ENCODE measurements at regions of chr12 and their contacts with region 1.

Region 1: DNA sequence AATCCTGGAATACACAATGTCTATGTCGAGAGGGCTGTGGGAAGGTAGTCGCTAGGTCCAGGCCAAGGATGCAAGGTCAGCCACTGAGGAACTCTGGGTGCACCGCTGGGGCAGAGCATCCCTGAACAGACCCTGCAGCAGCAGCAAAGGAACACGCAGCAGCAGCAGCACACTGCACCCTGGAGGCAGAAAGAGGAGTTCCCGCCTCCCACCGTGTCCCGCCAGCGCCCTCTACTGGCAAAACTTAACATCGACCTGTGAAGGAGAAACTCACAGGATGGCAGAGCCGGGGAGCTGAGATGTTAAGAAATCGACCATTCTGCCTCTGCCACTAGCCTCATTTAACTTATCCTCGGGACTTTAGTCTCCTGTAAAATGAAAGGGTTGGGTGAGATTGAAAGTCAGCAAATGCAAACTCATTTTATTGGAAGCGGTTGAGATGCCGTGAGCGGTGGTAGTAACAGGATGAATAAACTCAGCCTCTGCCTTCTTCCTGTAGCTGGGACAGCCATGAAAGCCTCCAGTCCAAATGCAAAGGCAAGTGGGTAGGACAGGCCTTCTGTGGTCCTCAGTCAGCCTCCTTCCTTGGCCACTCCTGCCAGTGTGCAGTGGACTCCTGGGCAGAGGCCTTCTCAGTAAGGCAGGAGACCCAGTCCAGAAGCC is 45.6 kb downstream of the STAB2 start:
- DNase-seq: peak in 2 of 5 donors; percentile 20 to 63
- ATAC-seq: peak in 1 of 4 donors; percentile 36
- H3K4me3 ChIP-seq: no peak overlapping the region
- H3K27ac ChIP-seq: no peak overlapping the region
- H3K4me1 ChIP-seq: peaks cover 0 to 7% (median 0%) of the 10 kb centered on the region in 12 donors
- H3K27me3 ChIP-seq: no peaks in the 10 kb centered on the region
- CTCF ChIP-seq: peak in 10 of 12 donors; percentile 29 to 56 (median 43)
- POLR2A ChIP-seq: no peak

Region 2: DNA sequence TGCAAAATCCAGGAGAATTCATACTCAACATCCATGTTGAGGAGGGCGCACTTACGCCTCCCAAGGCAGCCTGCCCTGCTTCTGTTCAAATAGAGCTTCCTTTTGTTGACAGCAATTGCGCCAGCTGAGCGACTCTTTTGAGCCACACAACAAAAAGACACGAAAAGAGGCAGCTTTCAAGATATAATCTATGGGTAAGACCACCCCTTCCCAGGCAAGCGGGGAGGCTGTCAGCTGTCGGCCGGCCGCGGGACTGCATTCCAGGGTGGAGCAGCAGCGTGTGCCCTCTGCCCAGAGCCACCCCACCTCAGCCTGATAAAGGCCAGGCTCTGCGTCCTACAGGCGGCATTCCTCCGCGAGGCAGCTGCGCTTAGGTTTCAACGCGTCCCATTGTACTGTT is 61.4 kb before region 1 on chr12:
- intact Hi-C with region 1: loop called in 1 of 10 experiments (anchors 10 kb)
- DNase-seq: peak in 4 of 5 donors; percentile 42 to 69 (median 62)
- ATAC-seq: peak; percentile 83 to 91 (median 90)
- H3K4me3 ChIP-seq: peak overlapping the region in 5 of 12 donors; percentile 17 to 35 (median 26)
- H3K27ac ChIP-seq: peak overlapping the region in 6 of 12 donors; percentile 23 to 44 (median 34)
- H3K4me1 ChIP-seq: peaks cover 0 to 9% (median 0%) of the 10 kb centered on the region in 12 donors
- H3K27me3 ChIP-seq: peaks cover 0 to 12% (median 0%) of the 10 kb centered on the region in 9 donors
- CTCF ChIP-seq: peak in 1 of 12 donors; percentile 13
- POLR2A ChIP-seq: no peak

Region 3: GRCh38 chr12:103580026-103580425 is 52.7 kb before region 1 on chr12:
- intact Hi-C with region 1: loop called in 3 of 10 experiments (anchors 5 to 10 kb)
- DNase-seq: no peak
- ATAC-seq: no peak
- H3K4me3 ChIP-seq: no peak overlapping the region
- H3K27ac ChIP-seq: no peak overlapping the region
- H3K4me1 ChIP-seq: peaks cover 0 to 7% (median 0%) of the 10 kb centered on the region in 12 donors
- H3K27me3 ChIP-seq: peaks cover 0 to 18% (median 0%) of the 10 kb centered on the region in 9 donors
- CTCF ChIP-seq: no peak
- POLR2A ChIP-seq: no peak

Region 4: GRCh38 chr12:103657331-103657730 is 24.6 kb after region 1 on chr12:
- intact Hi-C with region 1: no loop called
- DNase-seq: no peak
- ATAC-seq: no peak
- H3K4me3 ChIP-seq: no peak overlapping the region
- H3K27ac ChIP-seq: no peak overlapping the region
- H3K4me1 ChIP-seq: no peaks in the 10 kb centered on the region
- H3K27me3 ChIP-seq: peaks cover 0 to 18% (median 0%) of the 10 kb centered on the region in 9 donors
- CTCF ChIP-seq: no peak
- POLR2A ChIP-seq: no peak